ENCODE measurements at regions of chr16 and their contacts with region 1.

Region 1: GRCh38 chr16:74709441-74709877 is 8.8 kb upstream of the MLKL start:
- DNase-seq: peak; percentile 84
- ATAC-seq: peak; percentile 99
- H3K4me3 Mint-ChIP-seq: no peak overlapping the region
- H3K27ac Mint-ChIP-seq: no peak overlapping the region
- H3K4me1 Mint-ChIP-seq: peaks cover 12% of the 10 kb centered on the region
- H3K27me3 Mint-ChIP-seq: no peaks in the 10 kb centered on the region
- CTCF ChIP-seq: peak; percentile 95

Region 2: GRCh38 chr16:74679983-74680382 is 29.5 kb before region 1 on chr16:
- CTCF ChIA-PET with region 1: no interaction called
- POLR2A ChIA-PET with region 1: no interaction called
- intact Hi-C with region 1: no loop called
- DNase-seq: no peak
- ATAC-seq: no peak
- H3K4me3 Mint-ChIP-seq: no peak overlapping the region
- H3K27ac Mint-ChIP-seq: no peak overlapping the region
- H3K4me1 Mint-ChIP-seq: peaks cover 2% of the 10 kb centered on the region
- H3K27me3 Mint-ChIP-seq: no peaks in the 10 kb centered on the region
- CTCF ChIP-seq: no peak

Region 3: DNA sequence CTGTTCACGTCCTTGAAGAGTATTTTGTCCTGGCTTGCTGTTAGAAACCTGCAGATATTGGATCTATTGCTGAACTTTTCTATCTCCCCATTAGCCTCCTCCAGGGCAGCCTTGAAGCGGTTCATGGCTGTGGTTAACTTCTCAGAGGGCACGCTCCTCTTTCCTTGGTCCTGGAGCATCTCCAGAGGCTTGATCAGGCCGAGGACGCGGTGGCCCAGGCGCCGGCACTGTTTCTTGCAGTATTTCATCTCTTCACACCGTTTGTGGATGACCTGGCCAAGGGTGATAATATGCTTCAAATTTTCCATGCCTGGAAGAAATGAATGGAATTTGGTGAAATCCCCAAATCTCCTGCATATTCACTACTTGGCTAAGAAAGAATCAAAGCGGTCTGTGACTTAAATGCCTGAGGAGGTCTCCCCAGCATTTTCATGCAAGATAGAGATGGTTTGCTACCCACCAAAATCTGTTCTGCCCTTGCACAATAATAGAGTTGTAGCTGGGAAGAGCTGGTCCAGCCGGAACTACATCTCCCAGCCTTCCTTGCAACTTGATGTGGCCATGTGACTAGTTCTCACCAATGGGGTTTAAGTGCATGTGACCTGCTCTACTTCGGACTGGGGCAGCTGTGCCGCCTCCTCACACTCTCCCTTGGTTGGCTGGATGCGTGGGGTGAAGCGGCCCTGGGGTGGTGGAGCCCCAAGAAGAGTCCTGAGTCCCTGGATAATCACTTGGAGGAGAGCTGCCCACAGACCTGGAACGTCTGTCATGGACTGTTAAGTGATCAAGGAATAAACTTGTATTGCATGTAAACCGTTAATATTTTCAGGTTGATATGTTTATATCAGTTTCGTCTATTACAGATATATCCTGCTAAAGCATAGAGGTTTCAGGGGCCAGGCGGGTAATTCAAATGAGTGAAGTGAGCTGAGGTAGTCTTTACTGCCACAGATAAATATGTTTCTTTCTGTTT is 13.7 kb before region 1 on chr16:
- CTCF ChIA-PET with region 1: interaction called, 17 read pairs
- POLR2A ChIA-PET with region 1: interaction called, 3 read pairs
- intact Hi-C with region 1: no loop called
- DNase-seq: peak; percentile 82
- ATAC-seq: peak; percentile 82
- H3K4me3 Mint-ChIP-seq: peak overlapping the region; percentile 64
- H3K27ac Mint-ChIP-seq: no peak overlapping the region
- H3K4me1 Mint-ChIP-seq: peaks cover 34% of the 10 kb centered on the region
- H3K27me3 Mint-ChIP-seq: no peaks in the 10 kb centered on the region
- CTCF ChIP-seq: no peak

Region 4: DNA sequence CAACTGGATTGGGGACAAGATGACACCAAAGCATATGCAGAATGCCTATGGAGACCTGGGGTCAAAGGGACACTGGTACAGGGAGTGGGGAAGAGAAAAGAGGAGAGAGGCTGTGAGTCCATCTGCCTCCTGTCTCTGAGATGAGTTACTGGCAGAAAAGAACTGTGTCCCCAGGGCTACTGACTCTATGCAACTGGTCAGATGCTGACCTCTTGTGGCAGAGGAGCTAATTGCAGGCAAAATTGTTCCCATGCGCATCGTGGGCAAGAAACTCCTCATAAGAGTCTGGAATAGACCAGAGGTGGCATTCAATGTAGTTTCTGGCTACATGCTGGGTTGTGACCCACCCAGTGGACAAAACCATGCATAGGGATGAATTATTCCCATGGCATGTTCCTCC is 17.3 kb after region 1 on chr16:
- CTCF ChIA-PET with region 1: interaction called, 34 read pairs
- POLR2A ChIA-PET with region 1: interaction called, 3 read pairs
- intact Hi-C with region 1: no loop called
- DNase-seq: peak; percentile 70
- ATAC-seq: peak; percentile 45
- H3K4me3 Mint-ChIP-seq: no peak overlapping the region
- H3K27ac Mint-ChIP-seq: no peak overlapping the region
- H3K4me1 Mint-ChIP-seq: peaks cover 7% of the 10 kb centered on the region
- H3K27me3 Mint-ChIP-seq: no peaks in the 10 kb centered on the region
- CTCF ChIP-seq: peak; percentile 66

Region 5: DNA sequence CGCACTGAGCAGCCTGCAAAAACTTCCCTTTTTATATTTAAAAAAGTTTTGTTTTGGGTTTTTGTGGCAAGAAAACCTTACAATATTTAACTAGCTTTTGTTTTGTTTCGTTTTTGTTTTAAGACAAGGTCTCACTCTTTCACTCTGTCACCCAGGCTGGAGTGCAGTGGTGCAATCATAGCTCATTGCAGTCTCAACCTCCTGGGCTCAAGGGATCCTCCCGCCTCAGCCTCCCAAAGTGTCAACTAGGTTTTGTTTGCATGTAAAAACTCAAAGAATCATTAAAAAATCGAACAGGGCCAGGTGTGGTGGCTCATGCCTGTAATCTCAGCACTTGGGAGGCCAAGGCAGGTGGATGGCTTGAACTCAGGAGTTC is 143.0 kb after region 1 on chr16:
- CTCF ChIA-PET with region 1: no interaction called
- POLR2A ChIA-PET with region 1: no interaction called
- intact Hi-C with region 1: loop called (anchors 10 kb)
- DNase-seq: no peak
- ATAC-seq: no peak
- H3K4me3 Mint-ChIP-seq: no peak overlapping the region
- H3K27ac Mint-ChIP-seq: no peak overlapping the region
- H3K4me1 Mint-ChIP-seq: no peaks in the 10 kb centered on the region
- H3K27me3 Mint-ChIP-seq: no peaks in the 10 kb centered on the region
- CTCF ChIP-seq: no peak

Measured in activated CD8-positive, alpha-beta T cell treated with anti-CD3 and anti-CD28 coated beads for 36 hours (primary cell).